ENCODE measurements at regions of chr19 and their contacts with region 1.

Region 1: DNA sequence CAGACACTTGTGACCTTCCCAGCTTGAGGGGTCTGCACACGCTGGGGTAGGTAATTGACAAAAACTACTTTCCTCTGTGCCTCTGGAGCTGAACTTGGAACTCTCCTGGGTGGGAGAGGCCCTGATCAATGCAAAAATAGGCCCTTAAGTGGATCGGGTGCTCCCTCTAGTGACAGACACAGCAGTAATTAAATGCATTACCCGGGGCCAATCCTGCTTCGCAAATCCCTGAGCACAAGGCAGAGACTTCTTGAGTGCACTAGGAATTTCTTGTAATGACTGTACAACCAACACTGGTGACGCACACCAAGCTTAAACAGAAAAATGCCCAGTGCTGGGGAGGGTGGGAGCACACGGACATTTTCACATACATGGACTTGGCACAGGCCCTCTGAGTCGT is 10.6 kb upstream of the UBE2S start:
- DNase-seq: peak; percentile 63
- H3K4me3 ChIP-seq: no peak overlapping the region
- CTCF ChIP-seq: peak; percentile 68

Region 2: GRCh38 chr19:55132453-55133129 is 285.6 kb before region 1 on chr19:
- CTCF ChIA-PET with region 1: interaction called, 15 read pairs
- POLR2A ChIA-PET with region 1: no interaction called
- DNase-seq: no peak
- H3K4me3 ChIP-seq: no peak overlapping the region
- CTCF ChIP-seq: no peak